ENCODE measurements at regions of chr2 and their contacts with region 1.

Region 1: GRCh38 chr2:55168221-55169154 is 63.6 kb downstream of the CLHC1 start:
- DNase-seq: peak; percentile 88
- H3K4me3 ChIP-seq: peak overlapping the region; percentile 16
- H3K27ac ChIP-seq: peak overlapping the region; percentile 38
- H3K4me1 ChIP-seq: peaks cover 61% of the 10 kb centered on the region
- H3K27me3 ChIP-seq: no peaks in the 10 kb centered on the region

Region 2: GRCh38 chr2:54899576-54900200 is 268.8 kb before region 1 on chr2:
- in situ Hi-C with region 1: loop called (anchors 10 kb)
- DNase-seq: peak; percentile 85
- H3K4me3 ChIP-seq: no peak overlapping the region
- H3K27ac ChIP-seq: no peak overlapping the region
- H3K4me1 ChIP-seq: peaks cover 23% of the 10 kb centered on the region
- H3K27me3 ChIP-seq: no peaks in the 10 kb centered on the region